ENCODE measurements at regions of chr22 and their contacts with region 1.

Region 1: GRCh38 chr22:23075525-23076216 is 5.4 kb downstream of the GNAZ start:
- DNase-seq: no peak
- ATAC-seq: no peak
- H3K4me3 ChIP-seq: no peak overlapping the region
- H3K27ac ChIP-seq: no peak overlapping the region
- H3K4me1 ChIP-seq: peaks cover 0 to 13% of the 10 kb centered on the region in 2 experiments; a peak in 3 of 5 replicates
- H3K27me3 ChIP-seq: peaks cover 44 to 97% of the 10 kb centered on the region in 2 experiments
- CTCF ChIP-seq: no peak
- EP300 ChIP-seq: no peak
- POLR2A ChIP-seq: no peak
- RAD21 ChIP-seq: no peak

Region 2: DNA sequence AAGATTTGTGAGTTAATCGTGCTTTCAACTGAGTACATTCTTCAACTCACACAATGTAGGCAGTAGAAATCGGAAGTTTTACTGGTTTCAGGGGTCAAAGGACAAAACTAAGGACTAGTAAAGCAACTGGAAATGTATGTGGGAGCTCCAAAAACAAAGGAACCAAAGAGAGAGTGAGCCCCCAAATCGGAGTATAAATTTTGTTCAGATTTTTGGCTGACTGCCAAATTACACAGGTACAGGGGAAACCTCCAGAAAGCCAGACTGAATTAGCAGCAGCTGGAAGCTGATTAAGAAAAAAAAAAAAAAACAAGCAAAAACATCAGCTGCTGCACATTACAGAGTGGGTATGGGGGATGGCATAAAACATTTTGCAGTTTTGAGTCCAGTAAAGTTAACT is 80.5 kb before region 1 on chr22:
- CTCF ChIA-PET with region 1: no interaction called
- POLR2A ChIA-PET with region 1: no interaction called
- in situ Hi-C with region 1: no loop called
- intact Hi-C with region 1: no loop called
- DNase-seq: peak in 3 of 4 experiments; percentile 67 to 72 (median 71)
- ATAC-seq: no peak
- H3K4me3 ChIP-seq: no peak overlapping the region
- H3K27ac ChIP-seq: no peak overlapping the region
- H3K4me1 ChIP-seq: no peaks in the 10 kb centered on the region
- H3K27me3 ChIP-seq: peaks cover 0 to 5% of the 10 kb centered on the region in 2 experiments; a peak in 1 of 5 replicates
- CTCF ChIP-seq: no peak
- EP300 ChIP-seq: no peak
- POLR2A ChIP-seq: no peak
- RAD21 ChIP-seq: no peak

Region 3: GRCh38 chr22:23088199-23088604 is 12.5 kb after region 1 on chr22:
- CTCF ChIA-PET with region 1: interaction called, 3 read pairs
- POLR2A ChIA-PET with region 1: interaction called, 136 read pairs
- in situ Hi-C with region 1: no loop called
- intact Hi-C with region 1: loop called (anchors 1 kb)
- DNase-seq: peak; percentile 51 to 59 (median 55)
- ATAC-seq: peak; percentile 4
- H3K4me3 ChIP-seq: no peak overlapping the region
- H3K27ac ChIP-seq: no peak overlapping the region
- H3K4me1 ChIP-seq: peaks cover 17 to 38% of the 10 kb centered on the region in 2 experiments; a peak in 4 of 5 replicates
- H3K27me3 ChIP-seq: peaks cover 63 to 93% of the 10 kb centered on the region in 2 experiments; a peak in 4 of 5 replicates
- CTCF ChIP-seq: no peak
- EP300 ChIP-seq: no peak
- POLR2A ChIP-seq: no peak
- RAD21 ChIP-seq: no peak

Region 4: GRCh38 chr22:23098718-23099530 is 23.3 kb after region 1 on chr22:
- CTCF ChIA-PET with region 1: no interaction called
- POLR2A ChIA-PET with region 1: interaction called, 16 read pairs
- in situ Hi-C with region 1: no loop called
- intact Hi-C with region 1: no loop called
- DNase-seq: peak in 2 of 4 experiments; percentile 63
- ATAC-seq: no peak
- H3K4me3 ChIP-seq: no peak overlapping the region
- H3K27ac ChIP-seq: no peak overlapping the region
- H3K4me1 ChIP-seq: peaks cover 0 to 45% of the 10 kb centered on the region in 2 experiments; a peak in 3 of 5 replicates
- H3K27me3 ChIP-seq: peaks cover 95 to 100% of the 10 kb centered on the region in 2 experiments
- CTCF ChIP-seq: no peak
- EP300 ChIP-seq: no peak
- POLR2A ChIP-seq: no peak
- RAD21 ChIP-seq: no peak

Region 5: GRCh38 chr22:23106906-23107367 is 31.3 kb after region 1 on chr22:
- CTCF ChIA-PET with region 1: interaction called, 3 read pairs
- POLR2A ChIA-PET with region 1: interaction called, 28 read pairs
- in situ Hi-C with region 1: no loop called
- intact Hi-C with region 1: no loop called
- DNase-seq: peak; percentile 59 to 66 (median 64)
- ATAC-seq: peak; percentile 1
- H3K4me3 ChIP-seq: no peak overlapping the region
- H3K27ac ChIP-seq: no peak overlapping the region
- H3K4me1 ChIP-seq: peaks cover 0 to 33% of the 10 kb centered on the region in 2 experiments; a peak in 2 of 5 replicates
- H3K27me3 ChIP-seq: peaks cover 63 to 100% of the 10 kb centered on the region in 2 experiments
- CTCF ChIP-seq: 0 out of 6 replicates have a peak, but pooled peaks of 1 of the 3 experiments have one; percentile 16
- EP300 ChIP-seq: no peak; the same call in 1 of the 2 replicates
- POLR2A ChIP-seq: no peak
- RAD21 ChIP-seq: no peak

Region 6: DNA sequence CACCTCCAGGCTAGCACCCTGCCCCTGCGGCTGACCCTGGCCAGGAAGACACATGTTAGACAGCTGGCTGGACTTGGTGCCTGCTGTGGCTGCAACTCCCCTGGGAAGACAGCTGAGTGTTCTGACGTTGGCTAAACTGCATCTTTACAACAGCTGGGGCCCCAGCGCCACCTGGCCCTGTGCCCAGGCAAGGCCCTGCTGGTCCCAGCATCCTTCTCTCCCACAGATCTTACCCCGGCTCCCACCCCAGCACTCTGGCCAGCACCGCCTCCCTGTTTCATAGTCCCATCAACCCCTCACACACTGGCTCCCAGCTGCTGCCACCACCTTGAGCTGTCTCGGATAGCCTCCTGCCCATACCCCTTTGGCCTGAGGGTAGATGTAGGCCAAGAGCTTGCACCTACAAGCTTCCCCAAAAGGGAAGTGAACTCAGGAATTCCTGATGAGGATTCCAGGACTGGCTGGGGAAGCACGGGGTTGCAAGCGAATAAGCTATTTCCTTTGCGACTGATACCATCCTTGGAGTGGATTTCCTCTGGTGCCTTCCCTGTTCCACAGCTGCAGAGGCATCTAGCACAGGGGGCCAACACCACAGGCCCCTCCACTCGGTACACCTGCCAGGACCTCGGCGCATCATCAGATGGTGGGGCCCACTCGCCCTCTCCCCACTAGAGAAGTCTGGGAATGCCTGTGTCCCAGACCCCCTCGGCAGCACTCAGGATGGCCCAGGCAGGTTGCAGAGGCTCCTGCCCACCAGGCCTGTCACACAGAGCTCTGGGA is 37.6 kb after region 1 on chr22:
- CTCF ChIA-PET with region 1: no interaction called
- POLR2A ChIA-PET with region 1: interaction called, 28 read pairs
- in situ Hi-C with region 1: no loop called
- intact Hi-C with region 1: no loop called
- DNase-seq: peak in 3 of 4 experiments; percentile 52 to 63 (median 55)
- ATAC-seq: no peak
- H3K4me3 ChIP-seq: no peak overlapping the region
- H3K27ac ChIP-seq: no peak overlapping the region
- H3K4me1 ChIP-seq: peaks cover 0 to 20% of the 10 kb centered on the region in 2 experiments; a peak in 1 of 5 replicates
- H3K27me3 ChIP-seq: peaks cover 43 to 100% of the 10 kb centered on the region in 2 experiments; a peak in 4 of 5 replicates
- CTCF ChIP-seq: peak in 1 of 3 experiments; percentile 4; a peak in 1 of 6 replicates
- EP300 ChIP-seq: no peak
- POLR2A ChIP-seq: no peak
- RAD21 ChIP-seq: no peak